ENCODE measurements at regions of chr10 and their contacts with region 1.

Region 1: GRCh38 chr10:97543025-97543575 is 29.5 kb upstream of the ANKRD2 start:
- DNase-seq: peak; percentile 98
- H3K4me3 ChIP-seq: no peak overlapping the region
- H3K27ac ChIP-seq: peak overlapping the region; percentile 99
- H3K4me1 ChIP-seq: peaks cover 61% of the 10 kb centered on the region
- H3K27me3 ChIP-seq: no peaks in the 10 kb centered on the region
- CTCF ChIP-seq: no peak
- POLR2A ChIP-seq: peak; percentile 80

Region 2: GRCh38 chr10:97388152-97388551 is 154.9 kb before region 1 on chr10:
- CTCF ChIA-PET with region 1: no interaction called
- POLR2A ChIA-PET with region 1: no interaction called
- dilution Hi-C with region 1: no loop called
- intact Hi-C with region 1: no loop called
- DNase-seq: no peak
- H3K4me3 ChIP-seq: no peak overlapping the region
- H3K27ac ChIP-seq: no peak overlapping the region
- H3K4me1 ChIP-seq: no peaks in the 10 kb centered on the region
- H3K27me3 ChIP-seq: no peaks in the 10 kb centered on the region
- CTCF ChIP-seq: no peak
- POLR2A ChIP-seq: no peak

Region 3: GRCh38 chr10:97445722-97446639 is 97.1 kb before region 1 on chr10 and contains the starts of genes EXOSC1 and ZDHHC16:
- CTCF ChIA-PET with region 1: no interaction called
- POLR2A ChIA-PET with region 1: no interaction called
- dilution Hi-C with region 1: no loop called
- intact Hi-C with region 1: loop called (anchors 1 kb)
- DNase-seq: peak; percentile 96
- H3K4me3 ChIP-seq: peak within 1 kb of the TSS; percentile 41 to 96 (median 87)
- H3K27ac ChIP-seq: peak within 1 kb of the TSS; percentile 61
- H3K4me1 ChIP-seq: peaks cover 18% of the 10 kb centered on the region
- H3K27me3 ChIP-seq: no peaks in the 10 kb centered on the region
- CTCF ChIP-seq: no peak
- POLR2A ChIP-seq: peak; percentile 84
- total RNA-seq, gene EXOSC1: 43.6 and 50.7 TPM in 2 replicates
- total RNA-seq, gene ZDHHC16: 52.0 and 53.2 TPM in 2 replicates

Region 4: DNA sequence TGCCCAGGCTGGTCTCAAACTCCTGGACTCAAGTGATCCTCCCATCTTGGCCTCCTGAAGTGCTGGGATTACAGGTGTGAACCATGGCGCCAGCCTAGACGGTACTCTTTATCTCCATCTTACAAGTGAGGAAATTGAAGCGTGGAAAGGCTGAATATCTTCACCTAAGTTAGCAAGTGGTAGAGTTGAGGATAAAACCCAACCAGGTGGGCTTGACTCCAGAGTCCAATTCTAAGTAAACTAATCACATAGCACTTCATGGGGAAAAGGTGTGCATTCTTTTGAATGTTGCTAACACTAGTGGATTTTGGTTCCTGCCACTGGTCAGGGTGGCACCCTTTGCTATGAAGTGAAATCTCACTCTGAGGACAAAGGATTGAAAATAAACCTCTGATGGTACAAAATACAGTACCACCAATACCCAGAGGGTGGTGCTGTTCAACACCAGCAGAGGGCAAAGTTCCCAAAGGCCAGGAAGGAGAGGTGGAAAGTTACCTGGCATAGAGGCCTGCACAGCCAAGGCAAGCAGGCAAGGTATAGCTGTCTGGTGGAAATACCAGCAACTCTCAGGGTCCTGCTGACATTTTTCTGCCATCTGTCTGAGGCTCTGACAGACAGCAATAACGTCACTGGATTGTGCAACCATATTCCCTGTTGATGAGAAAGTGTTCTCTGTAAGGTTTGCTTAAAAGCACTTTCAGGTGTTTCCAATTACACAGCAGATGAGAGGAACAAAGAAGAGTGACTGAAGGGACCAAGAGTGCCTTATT is 79.6 kb before region 1 on chr10:
- CTCF ChIA-PET with region 1: interaction called, 5 read pairs
- POLR2A ChIA-PET with region 1: no interaction called
- dilution Hi-C with region 1: no loop called
- intact Hi-C with region 1: loop called (anchors 2 kb)
- DNase-seq: peak; percentile 68
- H3K4me3 ChIP-seq: no peak overlapping the region
- H3K27ac ChIP-seq: no peak overlapping the region
- H3K4me1 ChIP-seq: peaks cover 3% of the 10 kb centered on the region
- H3K27me3 ChIP-seq: no peaks in the 10 kb centered on the region
- CTCF ChIP-seq: peak; percentile 75 to 76
- POLR2A ChIP-seq: no peak

Region 5: GRCh38 chr10:97518301-97519043 is 24.6 kb before region 1 on chr10:
- CTCF ChIA-PET with region 1: interaction called, 14 read pairs
- POLR2A ChIA-PET with region 1: interaction called, 5 read pairs
- dilution Hi-C with region 1: no loop called
- intact Hi-C with region 1: loop called (anchors 1 kb)
- DNase-seq: peak; percentile 64
- H3K4me3 ChIP-seq: no peak overlapping the region
- H3K27ac ChIP-seq: peak overlapping the region; percentile 56
- H3K4me1 ChIP-seq: peaks cover 28% of the 10 kb centered on the region
- H3K27me3 ChIP-seq: no peaks in the 10 kb centered on the region
- CTCF ChIP-seq: no peak
- POLR2A ChIP-seq: no peak

Region 6: DNA sequence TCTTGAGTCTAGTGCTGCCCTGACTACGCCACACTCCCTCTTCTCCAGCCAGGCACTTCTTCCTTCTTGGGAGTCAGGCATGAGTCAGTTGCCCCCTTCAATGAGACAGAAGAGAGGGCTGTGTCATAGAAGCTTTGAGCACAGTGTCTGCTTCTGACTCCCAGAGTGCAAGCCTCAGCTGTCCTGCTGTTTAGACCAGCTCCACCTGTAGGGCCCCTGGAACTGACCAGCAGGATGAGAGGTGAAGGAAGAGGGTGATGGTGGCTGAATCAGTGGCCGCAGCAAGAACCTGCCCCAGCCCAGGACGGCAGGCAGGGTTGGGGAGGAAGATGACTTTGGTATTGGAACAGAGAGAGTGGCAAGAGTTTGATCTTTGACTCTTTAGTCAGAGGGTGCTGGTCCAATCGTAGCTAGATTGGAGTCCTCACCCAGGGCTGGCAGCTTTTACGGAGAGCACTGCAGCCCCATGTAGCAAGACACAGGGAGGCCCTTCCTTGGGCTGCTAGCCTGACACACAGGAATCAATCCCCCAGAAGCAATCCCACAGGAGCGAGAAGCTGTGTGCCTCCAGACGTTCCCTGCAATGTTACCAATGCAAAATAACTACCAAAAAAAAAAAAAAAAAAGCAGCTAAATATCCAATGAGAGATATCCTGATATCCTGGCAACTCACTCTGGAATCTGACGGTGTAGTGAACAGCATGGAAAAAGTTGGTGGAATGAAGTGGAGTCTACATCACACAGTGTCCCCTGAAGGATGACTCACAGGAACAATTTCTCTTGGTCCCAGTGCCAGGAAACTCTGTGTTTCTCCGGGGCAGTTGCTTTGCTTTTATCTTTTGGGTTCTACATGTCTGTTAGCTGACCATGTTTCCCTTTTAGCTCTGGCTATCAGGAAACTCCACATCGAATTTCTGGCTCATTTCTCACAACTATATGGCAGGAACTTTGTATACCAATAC is 53.3 kb after region 1 on chr10:
- CTCF ChIA-PET with region 1: interaction called, 4 read pairs
- POLR2A ChIA-PET with region 1: no interaction called
- dilution Hi-C with region 1: no loop called
- intact Hi-C with region 1: loop called (anchors 2 kb)
- DNase-seq: peak; percentile 98
- H3K4me3 ChIP-seq: no peak overlapping the region
- H3K27ac ChIP-seq: peak overlapping the region; percentile 82
- H3K4me1 ChIP-seq: peaks cover 25% of the 10 kb centered on the region
- H3K27me3 ChIP-seq: no peaks in the 10 kb centered on the region
- CTCF ChIP-seq: no peak
- POLR2A ChIP-seq: peak; percentile 66

Measured in endothelial cell of umbilical vein (primary cell).